Activated CD8-positive, alpha-beta T cell treated with anti-CD3 and anti-CD28 coated beads, Interleukin-2, amount 10 ng/mL, durations not matched to agents 7 days and 5 days (primary cell): ENCODE measurements at regions of chr6 and their contacts with region 1.

Region 1: DNA sequence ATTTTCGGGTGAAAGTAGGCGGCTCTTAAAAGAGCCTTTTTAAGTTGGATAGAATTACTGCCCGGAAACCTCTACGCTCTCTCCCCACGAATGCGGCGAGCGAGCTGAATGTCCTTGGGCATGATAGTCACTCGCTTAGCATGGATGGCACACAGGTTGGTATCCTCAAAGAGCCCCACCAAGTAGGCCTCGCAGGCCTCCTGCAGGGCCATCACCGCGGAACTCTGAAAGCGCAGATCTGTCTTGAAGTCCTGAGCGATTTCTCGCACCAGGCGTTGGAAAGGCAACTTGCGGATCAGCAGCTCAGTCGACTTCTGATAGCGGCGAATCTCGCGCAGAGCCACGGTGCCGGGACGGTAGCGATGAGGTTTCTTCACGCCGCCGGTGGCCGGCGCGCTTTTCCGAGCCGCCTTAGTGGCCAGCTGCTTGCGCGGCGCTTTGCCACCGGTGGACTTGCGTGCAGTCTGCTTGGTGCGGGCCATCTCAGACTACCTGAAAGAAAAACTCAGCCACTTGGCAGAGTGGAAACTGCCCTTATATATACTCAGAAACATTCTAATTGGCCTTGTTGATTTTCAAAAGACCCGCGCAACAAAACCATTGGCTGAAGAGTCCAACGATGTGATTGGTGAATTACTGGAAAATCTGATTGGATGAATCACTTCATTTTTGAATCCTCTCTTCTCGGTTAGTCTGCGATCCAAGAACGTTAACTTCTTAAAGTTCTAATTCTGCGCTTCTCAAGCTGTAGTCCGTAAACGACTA is 93.9 kb upstream of the BTN3A2 start:
- DNase-seq: peak; percentile 91
- ATAC-seq: peak; percentile 47
- H3K4me3 Mint-ChIP-seq: no peak overlapping the region
- H3K27ac Mint-ChIP-seq: no peak overlapping the region
- H3K4me1 Mint-ChIP-seq: peaks cover 40% of the 10 kb centered on the region
- H3K27me3 Mint-ChIP-seq: no peaks in the 10 kb centered on the region

Region 2: DNA sequence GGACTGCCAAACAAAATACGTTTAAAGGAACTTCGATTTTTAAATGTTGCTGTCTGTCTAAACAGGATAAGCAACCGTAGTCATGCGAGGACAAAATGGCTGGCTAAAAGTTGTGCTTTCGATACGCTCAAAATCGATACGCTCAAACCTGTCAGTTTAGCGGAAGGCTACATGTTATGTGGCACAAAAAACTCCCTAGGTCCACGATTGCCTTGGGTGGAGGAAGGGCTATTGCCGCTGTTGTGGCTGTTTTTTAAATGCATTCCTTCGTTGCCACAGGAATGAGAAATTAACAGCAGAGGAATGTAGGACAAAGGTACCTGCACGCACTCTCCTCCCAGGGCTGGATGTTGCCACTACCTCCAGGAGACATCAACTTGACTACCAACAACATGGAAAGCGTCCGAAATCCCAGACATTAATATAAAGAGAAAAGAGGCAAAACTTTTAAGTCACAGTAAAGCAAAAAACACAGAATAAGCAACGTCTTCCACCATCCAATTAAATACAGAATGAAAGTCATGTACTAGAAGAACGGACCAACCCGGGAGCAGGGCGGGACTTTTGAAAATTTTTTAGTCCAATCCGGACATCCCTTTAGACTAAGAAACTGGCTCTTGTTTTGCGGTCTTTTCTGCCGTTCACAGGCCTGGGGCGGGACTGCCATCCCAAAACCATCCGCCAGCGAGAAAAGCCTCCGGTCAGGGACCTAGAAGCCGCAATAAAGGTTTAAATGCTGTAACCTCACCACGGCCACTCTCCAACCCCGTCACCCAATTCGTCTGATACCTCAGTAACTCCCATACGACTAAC is 216.0 kb before region 1 on chr6:
- CTCF ChIA-PET with region 1: no interaction called
- POLR2A ChIA-PET with region 1: interaction called, 20 read pairs
- DNase-seq: peak; percentile 95
- ATAC-seq: peak; percentile 72
- H3K4me3 Mint-ChIP-seq: peak overlapping the region; percentile 87
- H3K27ac Mint-ChIP-seq: peak overlapping the region; percentile 100
- H3K4me1 Mint-ChIP-seq: peaks cover 36% of the 10 kb centered on the region
- H3K27me3 Mint-ChIP-seq: no peaks in the 10 kb centered on the region

Region 3: DNA sequence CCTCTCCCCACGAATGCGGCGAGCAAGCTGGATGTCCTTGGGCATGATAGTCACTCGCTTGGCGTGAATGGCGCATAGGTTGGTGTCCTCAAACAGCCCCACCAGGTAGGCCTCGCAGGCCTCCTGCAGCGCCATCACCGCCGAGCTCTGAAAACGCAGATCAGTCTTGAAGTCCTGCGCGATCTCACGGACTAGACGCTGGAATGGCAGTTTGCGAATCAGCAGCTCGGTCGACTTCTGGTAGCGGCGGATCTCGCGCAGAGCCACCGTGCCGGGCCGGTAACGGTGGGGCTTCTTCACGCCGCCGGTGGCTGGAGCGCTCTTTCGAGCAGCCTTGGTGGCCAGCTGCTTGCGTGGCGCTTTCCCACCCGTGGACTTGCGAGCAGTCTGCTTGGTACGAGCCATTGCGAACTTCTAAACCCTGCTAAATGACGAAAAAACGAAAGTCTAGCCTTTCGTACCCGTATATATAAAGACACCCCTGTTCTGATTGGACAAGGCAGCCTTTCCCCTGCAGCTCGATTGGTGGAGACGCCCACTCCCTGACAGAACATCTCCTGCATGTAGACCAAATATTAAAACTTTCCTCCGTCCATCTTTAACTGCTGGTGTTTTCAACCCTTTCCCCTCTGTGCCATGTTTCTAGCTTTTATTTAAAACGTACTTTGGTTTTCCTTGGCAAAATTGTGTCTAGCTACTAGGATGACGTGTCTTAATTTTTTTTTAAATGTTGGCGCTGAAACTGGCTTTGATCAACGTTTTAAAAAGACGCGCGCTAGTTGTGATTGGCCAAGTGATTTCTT is 74.0 kb before region 1 on chr6:
- CTCF ChIA-PET with region 1: no interaction called
- POLR2A ChIA-PET with region 1: interaction called, 320 read pairs
- DNase-seq: peak; percentile 92
- ATAC-seq: peak; percentile 43
- H3K4me3 Mint-ChIP-seq: peak overlapping the region; percentile 99
- H3K27ac Mint-ChIP-seq: peak overlapping the region; percentile 93
- H3K4me1 Mint-ChIP-seq: peaks cover 50% of the 10 kb centered on the region
- H3K27me3 Mint-ChIP-seq: no peaks in the 10 kb centered on the region

Region 4: DNA sequence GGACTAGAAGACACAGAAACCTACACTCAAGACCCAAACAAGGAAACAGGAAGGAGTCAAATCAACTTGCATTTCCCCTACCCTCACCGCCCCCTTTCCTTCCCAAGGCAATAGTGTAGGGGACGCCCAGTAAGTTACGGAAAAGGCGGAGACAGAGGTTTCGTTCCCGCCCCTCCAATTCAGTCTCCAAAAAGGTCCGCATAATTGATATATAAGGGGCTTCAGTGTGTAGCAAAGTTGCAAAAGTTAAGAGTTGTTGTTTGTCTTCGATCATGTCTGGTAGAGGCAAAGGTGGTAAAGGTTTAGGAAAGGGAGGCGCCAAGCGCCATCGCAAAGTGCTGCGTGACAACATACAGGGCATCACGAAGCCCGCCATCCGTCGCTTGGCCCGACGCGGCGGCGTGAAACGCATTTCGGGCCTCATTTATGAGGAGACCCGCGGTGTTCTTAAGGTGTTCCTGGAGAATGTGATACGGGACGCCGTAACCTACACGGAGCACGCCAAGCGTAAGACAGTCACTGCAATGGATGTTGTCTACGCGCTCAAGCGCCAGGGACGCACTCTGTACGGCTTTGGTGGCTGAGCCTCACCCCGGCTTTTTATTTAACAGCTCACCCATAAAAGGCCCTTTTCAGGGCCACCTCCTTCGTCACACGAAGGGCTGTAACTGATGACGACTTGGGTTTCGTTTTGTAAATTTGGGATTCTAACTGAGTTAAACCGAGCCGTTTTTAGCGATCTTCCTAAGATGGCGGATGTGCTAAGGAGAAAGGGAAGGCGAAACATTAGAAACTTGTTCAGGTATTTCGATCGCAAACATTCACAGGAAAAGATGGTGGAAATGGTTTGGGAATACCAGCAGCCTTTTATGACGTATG is 30.7 kb before region 1 on chr6:
- CTCF ChIA-PET with region 1: interaction called, 4 read pairs
- POLR2A ChIA-PET with region 1: interaction called, 465 read pairs
- DNase-seq: peak; percentile 94
- ATAC-seq: peak; percentile 81
- H3K4me3 Mint-ChIP-seq: peak overlapping the region; percentile 74
- H3K27ac Mint-ChIP-seq: peak overlapping the region; percentile 96
- H3K4me1 Mint-ChIP-seq: peaks cover 51% of the 10 kb centered on the region
- H3K27me3 Mint-ChIP-seq: peaks cover 2% of the 10 kb centered on the region

Region 5: DNA sequence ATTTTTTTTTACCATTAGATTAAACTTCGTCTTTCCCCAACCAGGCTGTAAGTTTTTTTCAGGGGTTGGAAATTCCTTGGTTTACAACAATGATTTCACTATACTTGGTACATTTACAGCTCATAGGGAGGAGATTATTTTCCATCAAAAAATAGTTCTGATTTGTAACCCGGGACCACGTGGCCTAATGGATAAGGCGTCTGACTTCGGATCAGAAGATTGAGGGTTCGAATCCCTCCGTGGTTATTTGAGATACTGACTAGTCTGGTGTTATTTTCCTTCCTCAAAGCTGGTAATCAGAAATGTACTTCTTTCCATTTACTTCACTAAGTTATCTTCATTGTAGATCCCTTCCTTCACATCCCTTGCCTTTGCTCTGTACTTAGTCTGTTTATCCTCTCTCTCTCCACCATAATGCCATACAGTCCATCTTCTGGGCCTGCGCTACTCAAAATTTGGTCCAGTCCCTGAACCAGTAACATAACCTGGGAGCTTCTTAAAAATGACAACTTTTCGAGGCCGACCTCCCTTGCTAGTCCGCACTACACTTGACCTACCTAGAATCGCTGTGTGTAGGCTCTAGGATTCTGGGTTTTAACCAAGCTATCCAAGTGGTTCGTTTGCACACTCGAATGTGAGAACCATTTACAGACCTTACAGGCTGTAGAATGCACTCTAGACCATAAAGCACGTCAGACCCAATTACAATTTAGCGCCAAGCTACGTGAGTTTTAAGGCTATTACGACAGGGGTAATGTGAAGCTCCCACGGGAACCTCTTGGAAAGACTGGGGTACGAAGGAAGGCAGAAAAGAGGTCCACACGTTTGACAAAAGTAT is 51.8 kb after region 1 on chr6:
- CTCF ChIA-PET with region 1: interaction called, 15 read pairs
- POLR2A ChIA-PET with region 1: interaction called, 21 read pairs
- DNase-seq: peak; percentile 84
- ATAC-seq: peak; percentile 72
- H3K4me3 Mint-ChIP-seq: peak overlapping the region; percentile 86
- H3K27ac Mint-ChIP-seq: peak overlapping the region; percentile 86
- H3K4me1 Mint-ChIP-seq: peaks cover 36% of the 10 kb centered on the region
- H3K27me3 Mint-ChIP-seq: peaks cover 16% of the 10 kb centered on the region

Region 6: DNA sequence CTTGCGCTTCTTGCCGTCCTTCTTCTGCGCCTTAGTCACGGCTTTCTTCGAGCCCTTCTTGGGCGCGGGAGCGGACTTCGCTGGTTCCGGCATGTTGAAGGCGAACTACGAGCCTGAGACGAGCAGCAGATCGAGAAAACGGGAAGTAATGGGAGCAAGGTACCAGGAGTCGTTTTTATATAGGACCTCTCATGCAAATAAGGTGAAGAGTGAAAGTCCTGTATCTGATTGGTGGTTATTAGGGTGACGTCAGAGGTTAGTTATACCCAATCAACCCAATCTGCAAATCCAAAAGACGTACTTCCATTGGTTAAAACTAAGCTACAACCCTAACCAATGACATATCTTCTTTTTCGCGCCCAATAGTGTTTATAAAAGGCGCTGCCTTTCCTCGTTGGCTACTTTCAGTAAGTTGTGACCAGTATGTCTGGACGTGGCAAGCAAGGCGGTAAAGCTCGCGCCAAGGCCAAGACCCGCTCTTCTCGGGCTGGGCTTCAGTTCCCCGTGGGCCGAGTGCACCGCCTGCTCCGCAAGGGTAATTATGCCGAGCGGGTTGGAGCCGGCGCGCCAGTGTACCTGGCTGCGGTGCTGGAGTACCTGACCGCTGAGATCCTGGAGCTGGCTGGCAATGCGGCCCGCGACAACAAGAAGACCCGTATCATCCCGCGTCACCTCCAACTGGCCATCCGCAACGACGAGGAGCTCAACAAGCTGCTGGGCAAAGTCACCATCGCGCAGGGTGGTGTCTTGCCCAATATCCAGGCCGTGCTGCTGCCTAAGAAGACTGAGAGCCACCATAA is 875.8 kb after region 1 on chr6:
- CTCF ChIA-PET with region 1: no interaction called
- POLR2A ChIA-PET with region 1: interaction called, 96 read pairs
- DNase-seq: peak; percentile 91
- ATAC-seq: peak; percentile 64
- H3K4me3 Mint-ChIP-seq: no peak overlapping the region
- H3K27ac Mint-ChIP-seq: no peak overlapping the region
- H3K4me1 Mint-ChIP-seq: peaks cover 35% of the 10 kb centered on the region
- H3K27me3 Mint-ChIP-seq: no peaks in the 10 kb centered on the region

Region 7: GRCh38 chr6:27871924-27872638 is 1601.0 kb after region 1 on chr6:
- CTCF ChIA-PET with region 1: no interaction called
- POLR2A ChIA-PET with region 1: interaction called, 40 read pairs
- DNase-seq: peak; percentile 92
- ATAC-seq: peak; percentile 62
- H3K4me3 Mint-ChIP-seq: peak overlapping the region; percentile 85
- H3K27ac Mint-ChIP-seq: peak overlapping the region; percentile 99
- H3K4me1 Mint-ChIP-seq: peaks cover 64% of the 10 kb centered on the region
- H3K27me3 Mint-ChIP-seq: no peaks in the 10 kb centered on the region